Caco-2 (cell line): ENCODE measurements at regions of chr19 and their contacts with region 1.

Region 1: DNA sequence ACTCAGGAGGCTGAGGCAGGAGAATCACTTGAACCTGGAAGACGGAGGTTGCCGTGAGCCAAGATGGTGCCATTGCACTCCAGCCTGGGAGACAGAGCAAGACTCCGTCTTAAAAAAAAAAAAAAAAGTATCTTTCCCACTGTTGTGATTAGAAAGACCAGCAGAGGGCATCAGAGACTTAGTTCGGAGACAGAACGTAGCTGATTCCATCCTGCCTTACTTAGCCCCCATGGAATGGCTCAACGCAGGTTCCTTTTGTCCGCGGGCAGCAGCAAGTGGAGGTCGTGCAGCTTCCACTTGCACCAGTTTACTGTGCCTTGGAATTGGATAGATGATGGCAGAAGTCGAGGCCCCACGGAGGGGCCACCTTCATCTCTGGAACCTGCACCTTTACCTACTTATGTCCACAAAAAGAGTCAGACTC is 8.1 kb downstream of the TIMM29 start:
- DNase-seq: peak; percentile 75 to 80
- H3K4me3 ChIP-seq: no peak overlapping the region
- H3K4me3 Mint-ChIP-seq: peak overlapping the region; percentile 49
- H3K27ac Mint-ChIP-seq: peak overlapping the region; percentile 57
- H3K4me1 ChIP-seq: peaks cover 28% of the 10 kb centered on the region
- H3K4me1 Mint-ChIP-seq: peaks cover 7% of the 10 kb centered on the region
- H3K27me3 ChIP-seq: no peaks in the 10 kb centered on the region
- H3K27me3 Mint-ChIP-seq: no peaks in the 10 kb centered on the region
- CTCF ChIP-seq: peak; percentile 71 to 76

Region 2: GRCh38 chr19:10952809-10953208 is 16.1 kb after region 1 on chr19:
- CTCF ChIA-PET with region 1: interaction called, 9 read pairs
- POLR2A ChIA-PET with region 1: no interaction called
- intact Hi-C with region 1: loop called (anchors 2 kb)
- DNase-seq: peak; percentile 67 to 72
- H3K4me3 ChIP-seq: no peak overlapping the region
- H3K4me3 Mint-ChIP-seq: no peak overlapping the region
- H3K27ac Mint-ChIP-seq: no peak overlapping the region
- H3K4me1 ChIP-seq: peaks cover 13% of the 10 kb centered on the region
- H3K4me1 Mint-ChIP-seq: no peaks in the 10 kb centered on the region
- H3K27me3 ChIP-seq: no peaks in the 10 kb centered on the region
- H3K27me3 Mint-ChIP-seq: no peaks in the 10 kb centered on the region
- CTCF ChIP-seq: no peak

Region 3: GRCh38 chr19:11011668-11012067 is 75.0 kb after region 1 on chr19:
- CTCF ChIA-PET with region 1: interaction called, 9 read pairs
- POLR2A ChIA-PET with region 1: no interaction called
- intact Hi-C with region 1: loop called (anchors 1 kb)
- DNase-seq: peak in 1 of 2 experiments; percentile 23
- H3K4me3 ChIP-seq: no peak overlapping the region
- H3K4me3 Mint-ChIP-seq: no peak overlapping the region
- H3K27ac Mint-ChIP-seq: no peak overlapping the region
- H3K4me1 ChIP-seq: no peaks in the 10 kb centered on the region
- H3K4me1 Mint-ChIP-seq: no peaks in the 10 kb centered on the region
- H3K27me3 ChIP-seq: no peaks in the 10 kb centered on the region
- H3K27me3 Mint-ChIP-seq: no peaks in the 10 kb centered on the region
- CTCF ChIP-seq: peak in 1 of 2 experiments; percentile 18

Region 4: GRCh38 chr19:11090054-11090900 is 153.6 kb after region 1 on chr19:
- CTCF ChIA-PET with region 1: interaction called, 4 read pairs
- POLR2A ChIA-PET with region 1: no interaction called
- intact Hi-C with region 1: loop called (anchors 5 kb)
- DNase-seq: peak; percentile 96 to 99
- H3K4me3 ChIP-seq: peak overlapping the region; percentile 87
- H3K4me3 Mint-ChIP-seq: peak overlapping the region; percentile 90
- H3K27ac Mint-ChIP-seq: peak overlapping the region; percentile 99
- H3K4me1 ChIP-seq: peaks cover 42% of the 10 kb centered on the region
- H3K4me1 Mint-ChIP-seq: peaks cover 9% of the 10 kb centered on the region
- H3K27me3 ChIP-seq: no peaks in the 10 kb centered on the region
- H3K27me3 Mint-ChIP-seq: no peaks in the 10 kb centered on the region
- CTCF ChIP-seq: no peak

Region 5: DNA sequence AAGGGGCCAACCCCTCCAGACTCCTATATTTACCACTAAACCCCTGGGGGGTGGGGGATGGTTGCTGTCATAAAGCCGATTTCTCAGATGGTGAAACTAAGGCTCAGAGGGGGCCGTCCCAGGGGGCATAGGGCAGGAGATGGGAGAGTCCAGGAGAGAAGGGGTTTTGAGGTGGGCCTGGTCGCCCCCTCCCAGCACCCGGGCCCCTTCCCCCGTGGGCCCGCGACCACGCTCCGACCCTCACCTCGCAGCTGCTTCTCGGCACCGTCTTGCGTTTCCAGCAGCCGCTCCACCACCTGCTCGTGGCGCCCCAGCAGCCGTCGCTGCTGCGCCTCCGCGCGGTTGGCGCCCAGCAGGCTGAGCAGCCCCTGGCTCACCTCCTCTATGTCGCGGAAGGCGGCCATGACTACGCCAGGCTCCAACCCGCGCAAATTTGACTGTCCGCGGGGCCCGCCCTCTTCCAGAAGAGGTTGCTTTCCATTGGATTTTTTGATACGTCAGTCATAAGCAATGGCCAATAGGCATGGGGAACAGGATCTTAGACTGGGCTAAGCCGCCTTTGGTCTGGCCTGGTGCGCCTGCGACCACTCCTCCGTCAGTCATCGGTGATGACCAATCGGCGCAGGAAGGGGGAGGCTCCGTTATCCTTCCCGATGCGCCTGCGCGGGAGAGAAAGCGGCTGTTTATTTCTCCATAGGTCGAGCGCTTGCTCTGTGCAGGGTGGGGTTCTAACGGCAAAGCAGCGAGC is 218.9 kb after region 1 on chr19 and contains the start of gene SPC24:
- CTCF ChIA-PET with region 1: interaction called, 11 read pairs
- POLR2A ChIA-PET with region 1: no interaction called
- intact Hi-C with region 1: no loop called
- DNase-seq: peak; percentile 96 to 97
- H3K4me3 ChIP-seq: peak within 1 kb of the TSS; percentile 99
- H3K4me3 Mint-ChIP-seq: peak within 1 kb of the TSS; percentile 73
- H3K27ac Mint-ChIP-seq: peak within 1 kb of the TSS; percentile 2
- H3K4me1 ChIP-seq: peaks cover 9% of the 10 kb centered on the region; the same call in 1 of the 2 replicates
- H3K4me1 Mint-ChIP-seq: peaks cover 11% of the 10 kb centered on the region
- H3K27me3 ChIP-seq: no peaks in the 10 kb centered on the region
- H3K27me3 Mint-ChIP-seq: no peaks in the 10 kb centered on the region
- CTCF ChIP-seq: no peak
- total RNA-seq, gene SPC24: 35.7 and 44.8 TPM in 2 replicates